Left lung (tissue), 14 donors: ENCODE measurements at regions of chr9 and their contacts with region 1.

Region 1: GRCh38 chr9:127869310-127870152 is 7.9 kb downstream of the AK1 start:
- DNase-seq: peak; percentile 66 to 98 (median 88)
- ATAC-seq: peak; percentile 85
- H3K4me3 ChIP-seq: no peak overlapping the region
- H3K27ac ChIP-seq: no peak overlapping the region
- H3K4me1 ChIP-seq: peaks cover 10 to 65% of the 10 kb centered on the region in 2 donors
- H3K27me3 ChIP-seq: no peaks in the 10 kb centered on the region
- CTCF ChIP-seq: peak; percentile 81 to 96

Region 2: DNA sequence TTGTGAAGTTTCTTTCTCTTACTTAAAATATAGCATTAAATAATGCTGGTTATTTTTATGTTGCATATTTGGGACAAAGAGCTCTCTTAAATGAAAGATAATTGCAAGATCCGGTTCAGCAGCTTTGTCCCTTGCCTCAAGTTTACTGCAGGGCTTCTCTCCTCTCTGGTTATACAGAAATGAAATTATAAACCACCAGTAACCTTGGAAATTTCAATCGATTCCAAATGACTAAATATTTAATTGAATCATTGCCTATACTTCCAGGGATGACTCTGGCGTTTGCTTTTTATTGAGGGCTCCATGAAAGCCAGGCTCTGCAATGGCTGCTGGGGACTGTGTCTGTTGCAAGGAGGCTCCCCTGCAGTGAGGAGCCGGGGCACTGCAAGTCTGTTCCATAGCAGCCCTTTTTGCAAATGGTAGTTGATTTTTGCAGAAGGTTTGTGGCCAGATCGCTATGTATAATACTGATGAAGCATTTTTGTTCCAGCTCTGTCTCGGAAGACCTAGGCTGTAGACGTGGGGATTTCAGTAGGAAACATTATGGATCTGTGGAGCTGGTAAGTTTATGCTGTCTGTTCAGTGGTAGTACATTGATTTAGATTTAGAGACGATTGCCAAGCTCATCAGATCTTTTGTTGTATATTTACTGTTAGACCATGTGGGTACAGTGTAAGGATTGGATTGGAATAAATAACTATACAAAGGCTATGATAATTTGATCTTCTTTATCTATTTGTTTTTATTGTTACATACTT is 604.9 kb before region 1 on chr9 and contains the start of gene GARNL3:
- intact Hi-C with region 1: no loop called
- DNase-seq: peak in 1 of 4 donors; percentile 17
- ATAC-seq: no peak
- H3K4me3 ChIP-seq: no peak within 1 kb of the TSS
- H3K27ac ChIP-seq: no peak within 1 kb of the TSS
- H3K4me1 ChIP-seq: no peaks in the 10 kb centered on the region
- H3K27me3 ChIP-seq: no peaks in the 10 kb centered on the region
- CTCF ChIP-seq: no peak
- polyA plus RNA-seq, gene GARNL3: 26.6 to 40.4 (median 39.0) TPM

Region 3: DNA sequence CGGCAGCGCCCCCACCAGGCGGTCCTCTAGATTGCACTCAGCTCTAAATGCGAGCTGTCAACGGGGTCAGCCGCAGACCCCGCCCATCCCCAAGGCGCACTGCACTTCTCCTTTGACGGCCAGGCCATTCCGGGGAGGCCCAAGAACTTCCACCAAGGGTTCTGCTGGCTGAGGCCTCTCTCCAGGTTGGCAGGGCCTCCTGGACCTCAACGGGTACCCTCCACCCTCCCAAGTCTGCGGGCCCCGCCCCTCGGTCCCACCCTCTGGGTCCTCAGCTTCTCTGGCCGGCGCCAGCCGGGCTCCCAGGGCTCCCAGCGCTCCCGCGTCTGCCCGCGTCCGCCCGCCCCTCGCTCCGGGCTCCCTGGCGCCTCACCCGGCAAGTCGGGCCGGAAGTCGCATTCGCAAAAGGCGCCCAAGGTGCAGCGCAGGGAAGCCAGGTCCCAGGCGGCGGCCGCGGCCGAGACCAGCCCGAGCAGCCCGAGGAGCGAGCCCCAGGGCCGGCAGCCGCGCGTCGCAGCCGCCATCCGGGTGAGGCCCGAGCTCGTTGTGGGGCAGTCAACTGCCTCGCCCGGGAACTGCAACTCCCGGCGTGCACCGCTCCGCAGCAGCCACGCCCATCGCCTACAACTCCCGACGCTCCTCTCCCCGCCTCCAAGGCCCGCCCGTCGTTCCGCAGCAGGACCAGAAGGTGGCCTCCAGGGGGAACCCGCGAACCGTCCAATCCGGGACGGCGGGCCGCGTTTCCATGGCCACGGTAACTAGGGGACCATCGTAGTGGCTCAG is 134.6 kb before region 1 on chr9 and contains the start of gene TOR2A:
- intact Hi-C with region 1: loop called in 1 of 2 experiments (anchors 5 kb)
- DNase-seq: peak; percentile 98 to 99 (median 98)
- ATAC-seq: peak; percentile 96
- H3K4me3 ChIP-seq: peak within 1 kb of the TSS; percentile 64 to 67
- H3K27ac ChIP-seq: peak within 1 kb of the TSS; percentile 91 to 96
- H3K4me1 ChIP-seq: peaks cover 6 to 29% of the 10 kb centered on the region in 2 donors
- H3K27me3 ChIP-seq: no peaks in the 10 kb centered on the region
- CTCF ChIP-seq: peak; percentile 95
- polyA plus RNA-seq, gene TOR2A: 10.6 to 16.4 (median 13.2) TPM

Region 4: DNA sequence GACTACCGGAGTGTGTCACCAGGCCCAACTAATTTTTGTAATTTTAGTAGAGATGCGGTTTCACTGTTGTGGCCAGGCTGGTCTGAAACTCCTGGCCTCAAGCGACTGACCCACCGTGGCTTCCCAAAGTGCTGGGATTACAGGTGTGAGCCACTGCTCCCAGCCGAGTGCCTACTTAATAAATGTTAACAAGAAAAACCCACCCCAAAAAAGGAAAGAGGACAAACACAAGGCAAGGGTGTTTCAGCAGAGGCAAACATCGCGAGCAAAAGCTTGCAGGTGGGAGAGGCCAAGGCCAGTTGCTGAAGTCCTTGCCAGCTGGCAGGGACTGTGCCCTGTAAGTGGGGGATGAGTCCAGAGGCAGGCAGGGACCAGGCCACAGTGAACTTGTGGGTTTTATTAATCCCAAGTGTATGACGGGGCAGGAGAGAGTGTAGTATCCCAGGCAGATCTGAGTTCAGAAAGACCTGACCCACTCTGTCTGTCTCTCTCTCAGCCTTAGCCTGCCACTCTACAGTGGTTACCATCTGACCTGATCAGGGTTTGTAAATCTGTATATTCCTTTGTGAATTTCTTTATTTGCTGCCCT is 73.2 kb before region 1 on chr9:
- intact Hi-C with region 1: loop called in 1 of 2 experiments (anchors 10 kb)
- DNase-seq: peak in 1 of 4 donors; percentile 67
- ATAC-seq: peak; percentile 52
- H3K4me3 ChIP-seq: no peak overlapping the region
- H3K27ac ChIP-seq: peak overlapping the region; percentile 54 to 57
- H3K4me1 ChIP-seq: peaks cover 11 to 58% of the 10 kb centered on the region in 2 donors
- H3K27me3 ChIP-seq: peaks cover 0 to 11% of the 10 kb centered on the region in 2 donors
- CTCF ChIP-seq: no peak

Region 5: DNA sequence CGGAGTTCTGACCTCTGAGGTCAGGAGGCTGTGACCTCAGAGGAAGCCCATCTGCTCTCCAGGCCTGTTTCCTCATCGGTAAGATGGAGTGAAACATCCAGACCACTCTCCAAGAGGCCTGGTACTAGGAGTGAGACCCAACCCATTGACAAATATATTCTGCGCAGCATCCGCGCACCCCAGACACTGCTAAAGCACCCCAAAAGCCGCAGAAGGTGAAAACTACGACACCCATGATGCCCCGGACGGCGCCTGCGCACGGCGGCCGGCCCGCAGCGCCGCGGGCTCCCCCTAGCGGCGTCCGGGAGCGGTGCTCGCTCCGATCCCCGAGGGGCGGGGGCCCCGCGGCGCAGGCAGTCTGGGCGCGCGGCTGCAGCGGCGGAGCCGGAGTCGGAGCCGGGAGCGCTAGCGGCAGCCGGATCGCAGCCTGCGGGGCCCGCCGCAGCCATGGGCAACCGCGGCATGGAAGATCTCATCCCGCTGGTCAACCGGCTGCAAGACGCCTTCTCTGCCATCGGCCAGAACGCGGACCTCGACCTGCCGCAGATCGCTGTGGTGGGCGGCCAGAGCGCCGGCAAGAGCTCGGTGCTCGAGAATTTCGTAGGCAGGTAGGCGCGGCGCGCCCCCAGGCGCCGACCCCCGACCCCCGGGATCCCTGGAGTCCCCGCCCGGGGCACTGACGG is 333.6 kb after region 1 on chr9 and contains the start of gene DNM1:
- intact Hi-C with region 1: no loop called
- DNase-seq: peak; percentile 50 to 94 (median 71)
- ATAC-seq: peak; percentile 96
- H3K4me3 ChIP-seq: peak within 1 kb of the TSS; percentile 46 to 49
- H3K27ac ChIP-seq: no peak within 1 kb of the TSS
- H3K4me1 ChIP-seq: peaks cover 0 to 21% of the 10 kb centered on the region in 2 donors
- H3K27me3 ChIP-seq: peaks cover 8 to 44% of the 10 kb centered on the region in 2 donors
- CTCF ChIP-seq: peak; percentile 90 to 95
- polyA plus RNA-seq, gene DNM1: 60.6 to 90.0 (median 65.3) TPM